ENCODE measurements at regions of chr2 and their contacts with region 1.

Region 1: GRCh38 chr2:231713730-231714430 is 5.6 kb downstream of the PTMA start:
- DNase-seq: peak; percentile 94
- ATAC-seq: peak; percentile 75

Region 2: GRCh38 chr2:231677632-231678104 is 36.2 kb before region 1 on chr2:
- intact Hi-C with region 1: loop called (anchors 2 kb)
- DNase-seq: peak; percentile 91
- ATAC-seq: peak; percentile 34

Region 3: DNA sequence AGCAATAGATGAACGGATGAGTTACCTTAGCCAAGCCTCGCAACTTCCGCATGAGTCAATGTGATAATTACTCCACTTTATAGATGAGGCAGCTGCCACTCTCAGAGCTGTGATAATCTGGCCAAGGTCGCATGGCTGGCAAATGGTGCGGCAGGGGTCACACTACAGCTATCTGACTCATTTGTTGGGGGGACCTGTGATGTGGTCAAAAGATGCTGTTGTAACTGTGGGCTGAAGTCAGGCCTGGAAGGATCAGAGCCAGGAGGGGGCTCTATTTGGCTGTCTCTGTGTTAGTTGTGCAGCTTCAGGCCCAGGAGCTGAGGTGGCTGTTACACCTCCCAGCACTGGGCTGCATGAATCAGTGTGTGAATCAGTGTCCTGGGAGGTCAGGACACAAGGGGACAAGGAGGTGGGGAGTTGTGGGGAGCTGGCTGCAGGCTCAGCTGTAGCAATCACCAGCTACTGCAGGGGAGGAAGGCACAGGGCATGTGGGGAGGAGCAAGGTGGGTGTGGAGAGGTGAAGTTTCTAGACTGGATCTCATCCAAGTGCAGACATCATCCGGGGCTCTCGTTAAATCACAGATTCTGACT is 1266.1 kb after region 1 on chr2:
- intact Hi-C with region 1: no loop called
- DNase-seq: no peak
- ATAC-seq: no peak

Measured in sciatic nerve (tissue), 2 donors.